ENCODE measurements at regions of chr11 and their contacts with region 1.

Region 1: DNA sequence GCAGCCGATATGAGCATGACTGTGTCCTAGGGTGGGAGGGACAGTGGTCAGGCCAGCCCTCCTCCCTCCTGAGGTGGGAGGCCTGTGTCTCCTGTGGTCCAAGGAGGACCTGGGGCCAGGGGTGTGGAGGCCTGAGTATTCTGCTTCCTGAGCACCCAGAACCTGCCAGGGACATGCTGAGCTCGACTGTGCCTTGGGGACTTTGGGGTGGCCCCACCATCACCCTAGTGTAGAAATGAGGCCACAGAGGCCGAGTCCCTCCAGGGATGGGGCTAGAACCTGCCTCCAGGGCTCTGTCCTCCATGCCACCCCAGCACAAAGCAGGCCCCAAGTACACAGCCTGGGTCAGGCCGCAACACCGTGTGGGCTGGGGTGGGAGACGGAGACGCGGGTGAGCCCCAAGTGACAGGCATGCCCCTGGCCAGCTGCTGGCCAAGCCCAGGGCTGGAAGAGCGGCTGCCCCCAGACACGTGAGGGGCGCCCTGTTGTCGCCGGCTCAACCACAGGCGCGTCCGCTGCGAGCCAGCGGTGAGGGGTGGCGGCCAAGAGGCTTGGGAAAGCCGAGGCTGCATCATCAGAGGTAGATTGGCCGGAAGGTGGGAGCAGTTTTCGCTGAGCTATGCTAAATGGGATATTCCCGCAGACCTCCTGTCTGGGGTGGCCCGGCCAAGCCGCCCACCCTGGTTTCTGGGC is 981 bp downstream of the PRR33 start:
- DNase-seq: no peak
- ATAC-seq: no peak
- H3K4me3 Mint-ChIP-seq: no peak overlapping the region
- H3K27ac Mint-ChIP-seq: no peak overlapping the region
- H3K4me1 Mint-ChIP-seq: peaks cover 29% of the 10 kb centered on the region
- H3K27me3 Mint-ChIP-seq: no peaks in the 10 kb centered on the region
- CTCF ChIP-seq: no peak

Region 2: GRCh38 chr11:1943977-1944376 is 53.3 kb after region 1 on chr11:
- CTCF ChIA-PET with region 1: no interaction called
- POLR2A ChIA-PET with region 1: no interaction called
- intact Hi-C with region 1: loop called (anchors 1 kb)
- DNase-seq: peak; percentile 12
- ATAC-seq: no peak
- H3K4me3 Mint-ChIP-seq: peak overlapping the region; percentile 24
- H3K27ac Mint-ChIP-seq: no peak overlapping the region
- H3K4me1 Mint-ChIP-seq: peaks cover 2% of the 10 kb centered on the region
- H3K27me3 Mint-ChIP-seq: peaks cover 2% of the 10 kb centered on the region
- CTCF ChIP-seq: no peak